T-cell (primary cell): ENCODE measurements at regions of chr7 and their contacts with region 1.

Region 1: GRCh38 chr7:40658729-40659128 is 523.9 kb downstream of the SUGCT start:
- DNase-seq: no peak
- ATAC-seq: no peak
- H3K4me3 ChIP-seq: no peak overlapping the region
- H3K4me3 Mint-ChIP-seq: no peak overlapping the region
- H3K27ac ChIP-seq: no peak overlapping the region
- H3K27ac Mint-ChIP-seq: no peak overlapping the region
- H3K4me1 ChIP-seq: no peaks in the 10 kb centered on the region
- H3K4me1 Mint-ChIP-seq: no peaks in the 10 kb centered on the region
- H3K27me3 ChIP-seq: no peaks in the 10 kb centered on the region
- H3K27me3 Mint-ChIP-seq: no peaks in the 10 kb centered on the region

Region 2: DNA sequence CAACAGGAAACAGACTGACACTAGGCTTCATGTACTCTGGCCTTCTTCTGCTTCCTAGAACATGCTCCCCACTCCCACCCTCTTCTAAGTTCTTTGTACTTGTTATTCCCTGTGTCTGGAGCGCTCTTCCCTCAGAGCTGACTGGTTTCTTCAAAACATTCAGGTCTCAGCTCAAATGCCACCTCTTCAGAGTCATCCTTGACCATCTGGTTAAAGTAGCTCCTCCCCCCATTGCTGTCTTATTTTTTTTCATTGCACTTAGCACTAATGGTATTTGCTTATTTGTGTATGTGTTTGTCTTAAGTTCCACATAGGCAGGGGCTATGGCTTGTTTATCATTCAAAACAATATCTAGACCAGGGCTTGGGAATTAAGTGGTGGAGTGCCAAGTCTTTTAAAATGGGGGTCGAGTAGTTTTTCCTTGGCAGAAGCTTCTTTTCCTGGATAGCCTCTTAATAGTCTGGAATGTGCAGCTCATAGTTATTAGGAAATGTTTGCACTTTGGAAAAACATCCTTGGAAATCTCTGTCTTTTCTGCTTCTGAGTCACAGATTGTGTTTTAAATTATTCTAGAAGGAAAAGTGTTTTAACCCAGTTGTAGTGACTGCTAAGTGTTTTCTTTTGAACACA is 975.4 kb before region 1 on chr7:
- CTCF ChIA-PET with region 1: no interaction called
- POLR2A ChIA-PET with region 1: no interaction called
- DNase-seq: no peak
- ATAC-seq: no peak
- H3K4me3 ChIP-seq: no peak overlapping the region
- H3K4me3 Mint-ChIP-seq: no peak overlapping the region
- H3K27ac ChIP-seq: no peak overlapping the region
- H3K27ac Mint-ChIP-seq: no peak overlapping the region
- H3K4me1 ChIP-seq: peaks cover 0 to 7% of the 10 kb centered on the region in 2 experiments
- H3K4me1 Mint-ChIP-seq: peaks cover 42 to 52% (median 48%) of the 10 kb centered on the region in 3 donors
- H3K27me3 ChIP-seq: no peaks in the 10 kb centered on the region
- H3K27me3 Mint-ChIP-seq: no peaks in the 10 kb centered on the region

Region 3: DNA sequence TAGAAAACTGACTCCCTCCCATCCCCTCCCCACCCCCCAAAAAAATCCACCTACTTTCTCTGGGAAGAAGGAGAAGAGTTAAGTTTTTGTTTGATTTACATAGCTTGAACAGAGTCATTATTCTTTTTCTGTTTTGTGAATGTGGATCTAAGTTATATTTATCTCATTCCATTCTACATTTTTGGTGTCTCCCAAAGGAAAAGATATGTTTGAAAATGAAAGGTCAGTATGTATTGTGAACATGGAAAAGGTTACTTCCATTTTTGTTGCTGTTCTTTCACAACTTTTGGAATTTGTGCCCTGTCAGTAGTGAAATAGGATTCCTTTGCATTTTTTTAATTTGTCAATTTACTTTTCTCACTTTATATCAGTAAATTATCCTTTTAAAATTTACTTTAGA is 24.0 kb after region 1 on chr7:
- CTCF ChIA-PET with region 1: interaction called in 1 of 2 experiments, 12 read pairs
- POLR2A ChIA-PET with region 1: no interaction called
- DNase-seq: no peak
- ATAC-seq: no peak
- H3K4me3 ChIP-seq: no peak overlapping the region
- H3K4me3 Mint-ChIP-seq: no peak overlapping the region
- H3K27ac ChIP-seq: no peak overlapping the region
- H3K27ac Mint-ChIP-seq: no peak overlapping the region
- H3K4me1 ChIP-seq: no peaks in the 10 kb centered on the region
- H3K4me1 Mint-ChIP-seq: no peaks in the 10 kb centered on the region
- H3K27me3 ChIP-seq: no peaks in the 10 kb centered on the region
- H3K27me3 Mint-ChIP-seq: no peaks in the 10 kb centered on the region